Ovary (tissue), 10 donors: ENCODE measurements at regions of chr14 and their contacts with region 1.

Region 1: GRCh38 chr14:61797309-61797708 is 35.1 kb downstream of the SNAPC1 start:
- DNase-seq: no peak
- H3K4me3 ChIP-seq: no peak overlapping the region
- H3K27ac ChIP-seq: no peak overlapping the region
- H3K4me1 ChIP-seq: no peaks in the 10 kb centered on the region
- H3K27me3 ChIP-seq: no peaks in the 10 kb centered on the region
- CTCF ChIP-seq: no peak
- EP300 ChIP-seq: no peak
- POLR2A ChIP-seq: no peak

Region 2: GRCh38 chr14:60956202-60956601 is 841.1 kb before region 1 on chr14:
- intact Hi-C with region 1: no loop called
- DNase-seq: no peak
- H3K4me3 ChIP-seq: no peak overlapping the region
- H3K27ac ChIP-seq: no peak overlapping the region
- H3K4me1 ChIP-seq: peaks cover 4% of the 10 kb centered on the region
- H3K27me3 ChIP-seq: no peaks in the 10 kb centered on the region
- CTCF ChIP-seq: no peak
- EP300 ChIP-seq: no peak
- POLR2A ChIP-seq: no peak

Region 3: GRCh38 chr14:61780125-61780524 is 17.2 kb before region 1 on chr14:
- intact Hi-C with region 1: loop called in 1 of 4 experiments (anchors 2 kb)
- DNase-seq: no peak
- H3K4me3 ChIP-seq: no peak overlapping the region
- H3K27ac ChIP-seq: no peak overlapping the region
- H3K4me1 ChIP-seq: no peaks in the 10 kb centered on the region
- H3K27me3 ChIP-seq: no peaks in the 10 kb centered on the region
- CTCF ChIP-seq: no peak
- EP300 ChIP-seq: no peak
- POLR2A ChIP-seq: no peak